ENCODE measurements at regions of chr11 and their contacts with region 1.

Region 1: DNA sequence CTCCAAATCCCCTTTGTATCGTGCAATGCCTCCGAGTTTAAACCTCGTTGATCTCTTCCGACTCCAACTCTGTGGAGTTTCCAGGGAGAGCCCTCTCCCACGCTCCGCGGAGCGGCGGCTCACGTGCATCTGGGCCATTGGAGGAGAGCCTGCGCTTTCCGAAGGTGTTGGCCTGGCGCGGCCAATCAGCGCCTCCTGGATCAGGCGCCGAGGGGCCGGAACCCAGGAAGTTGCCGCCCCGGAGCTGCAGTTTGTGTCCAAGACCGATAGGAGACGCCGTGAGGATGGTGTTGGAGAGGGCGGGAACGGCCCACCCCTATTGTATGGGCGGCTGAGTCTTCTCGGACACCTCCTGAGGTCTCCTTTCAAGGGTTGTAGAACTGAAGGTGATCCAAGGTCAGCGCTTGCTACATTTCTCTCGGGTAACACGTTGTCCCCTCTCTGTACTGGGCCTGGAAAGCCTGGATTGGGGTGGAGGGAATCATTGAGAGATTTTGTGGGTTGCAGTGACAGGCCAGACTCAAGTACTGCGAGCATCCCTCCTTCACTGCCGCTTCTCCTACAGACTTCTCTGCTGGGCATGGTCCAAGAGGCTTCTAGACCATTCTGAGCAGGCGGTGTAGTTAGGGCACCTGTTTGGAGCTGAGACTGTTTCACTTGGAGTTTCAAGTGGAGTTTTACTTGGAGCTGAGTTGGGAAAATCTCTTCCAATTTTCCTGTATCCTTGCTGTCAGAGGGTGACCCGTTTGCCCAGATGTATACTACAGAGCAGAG is 1.7 kb downstream of the ADAMTS15 start:
- DNase-seq: peak in 3 of 4 donors; percentile 74 to 95 (median 87)
- ATAC-seq: peak; percentile 55
- H3K4me3 ChIP-seq: peak overlapping the region; percentile 45 to 80
- H3K27ac ChIP-seq: peak overlapping the region in 1 of 2 donors; percentile 26
- H3K4me1 ChIP-seq: peaks cover 0 to 9% of the 10 kb centered on the region in 2 donors
- H3K27me3 ChIP-seq: peaks cover 15 to 54% of the 10 kb centered on the region in 2 donors
- CTCF ChIP-seq: peak; percentile 37 to 41

Region 2: GRCh38 chr11:130403271-130403804 is 46.8 kb before region 1 on chr11:
- intact Hi-C with region 1: no loop called
- DNase-seq: peak in 2 of 4 donors; percentile 38 to 59
- ATAC-seq: peak; percentile 62
- H3K4me3 ChIP-seq: no peak overlapping the region
- H3K27ac ChIP-seq: peak overlapping the region in 1 of 2 donors; percentile 39
- H3K4me1 ChIP-seq: peaks cover 6 to 19% of the 10 kb centered on the region in 2 donors
- H3K27me3 ChIP-seq: peaks cover 0 to 9% of the 10 kb centered on the region in 2 donors
- CTCF ChIP-seq: no peak

Region 3: DNA sequence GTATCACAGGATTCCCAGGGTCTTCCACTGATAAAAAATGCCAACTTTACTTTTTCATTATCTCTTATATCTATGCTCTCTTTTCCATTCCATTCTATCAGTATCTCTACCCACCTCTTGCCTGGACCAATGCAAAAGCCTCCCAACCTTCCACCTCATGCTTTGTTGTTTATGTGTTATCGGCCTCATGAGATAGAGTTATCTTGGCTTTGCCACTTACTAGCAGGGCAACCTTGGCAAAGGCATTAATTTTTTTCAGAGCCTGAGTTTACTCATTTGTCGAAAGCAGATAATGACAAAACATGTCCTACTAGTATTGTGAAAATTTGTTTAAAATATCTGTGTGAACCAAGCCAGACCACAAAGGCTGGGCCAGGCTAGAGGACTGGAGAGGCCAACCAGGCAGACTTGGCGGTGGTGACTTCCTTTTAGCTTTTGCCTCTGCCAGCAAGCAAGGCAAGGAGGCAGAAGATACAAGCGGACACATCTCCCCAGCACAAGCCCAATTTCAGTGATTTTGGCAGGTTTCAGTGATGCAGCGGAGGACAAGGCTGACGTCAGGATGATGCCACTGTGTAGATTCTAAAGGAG is 105.2 kb after region 1 on chr11:
- intact Hi-C with region 1: no loop called
- DNase-seq: no peak
- ATAC-seq: no peak
- H3K4me3 ChIP-seq: no peak overlapping the region
- H3K27ac ChIP-seq: no peak overlapping the region
- H3K4me1 ChIP-seq: peaks cover 0 to 3% of the 10 kb centered on the region in 2 donors
- H3K27me3 ChIP-seq: no peaks in the 10 kb centered on the region
- CTCF ChIP-seq: no peak

Region 4: DNA sequence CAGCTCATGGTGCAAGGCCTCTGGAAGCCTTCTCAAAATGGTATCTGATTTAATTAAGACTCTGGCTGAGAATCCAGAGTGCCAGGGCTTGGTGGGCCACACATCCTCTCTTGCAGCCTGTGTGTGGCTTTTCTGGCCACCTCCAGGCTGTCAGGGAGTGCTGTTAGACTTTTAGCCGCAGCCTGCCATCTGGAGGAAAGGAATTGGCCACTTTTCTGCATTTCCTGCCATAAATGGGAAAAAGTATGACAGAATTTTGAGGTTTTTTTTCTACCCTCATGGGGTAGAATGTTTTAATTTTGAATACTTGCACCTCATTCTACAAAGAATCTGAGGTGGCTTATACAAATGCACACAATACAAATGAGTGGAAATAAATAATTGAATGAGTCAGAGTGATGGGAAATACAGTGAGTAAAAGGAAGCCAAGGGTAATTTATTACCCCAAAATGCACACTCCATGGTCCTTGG is 216.6 kb after region 1 on chr11:
- intact Hi-C with region 1: loop called in 1 of 2 experiments (anchors 10 kb)
- DNase-seq: no peak
- ATAC-seq: peak; percentile 25
- H3K4me3 ChIP-seq: no peak overlapping the region
- H3K27ac ChIP-seq: no peak overlapping the region
- H3K4me1 ChIP-seq: no peaks in the 10 kb centered on the region
- H3K27me3 ChIP-seq: no peaks in the 10 kb centered on the region
- CTCF ChIP-seq: no peak

Measured in left lung (tissue), 14 donors.